ENCODE measurements at regions of chr2 and their contacts with region 1.

Region 1: DNA sequence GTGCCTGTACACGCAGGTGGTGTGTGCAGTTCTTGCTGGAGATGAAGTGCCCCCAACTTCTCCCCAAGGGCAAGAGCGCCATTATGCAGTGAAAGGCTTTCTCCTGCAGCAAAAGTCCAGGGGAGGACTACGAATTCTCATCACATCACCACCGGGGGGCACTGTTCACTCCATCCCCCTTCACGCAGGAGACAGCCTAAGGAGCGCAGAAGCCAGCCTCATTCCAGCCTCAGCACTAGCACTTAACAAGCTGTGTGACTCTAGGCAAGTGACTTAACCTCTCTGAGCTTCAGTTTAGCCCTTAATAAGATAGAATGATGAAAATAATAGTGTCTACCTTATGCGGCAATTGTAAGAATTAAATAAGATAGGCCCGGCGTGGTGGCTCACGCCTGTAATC is 32.3 kb downstream of the DNMT3A start:
- DNase-seq: peak; percentile 81
- ATAC-seq: peak; percentile 18
- H3K4me3 Mint-ChIP-seq: no peak overlapping the region
- H3K27ac Mint-ChIP-seq: peak overlapping the region; percentile 71
- H3K4me1 Mint-ChIP-seq: peaks cover 77% of the 10 kb centered on the region
- H3K27me3 Mint-ChIP-seq: no peaks in the 10 kb centered on the region
- CTCF ChIP-seq: peak; percentile 50

Region 2: GRCh38 chr2:25294573-25295462 is 14.6 kb before region 1 on chr2:
- CTCF ChIA-PET with region 1: interaction called, 12 read pairs
- POLR2A ChIA-PET with region 1: interaction called, 20 read pairs
- intact Hi-C with region 1: no loop called
- DNase-seq: peak; percentile 90
- ATAC-seq: peak; percentile 94
- H3K4me3 Mint-ChIP-seq: peak overlapping the region; percentile 63
- H3K27ac Mint-ChIP-seq: peak overlapping the region; percentile 89
- H3K4me1 Mint-ChIP-seq: peaks cover 71% of the 10 kb centered on the region
- H3K27me3 Mint-ChIP-seq: no peaks in the 10 kb centered on the region
- CTCF ChIP-seq: no peak

Region 3: DNA sequence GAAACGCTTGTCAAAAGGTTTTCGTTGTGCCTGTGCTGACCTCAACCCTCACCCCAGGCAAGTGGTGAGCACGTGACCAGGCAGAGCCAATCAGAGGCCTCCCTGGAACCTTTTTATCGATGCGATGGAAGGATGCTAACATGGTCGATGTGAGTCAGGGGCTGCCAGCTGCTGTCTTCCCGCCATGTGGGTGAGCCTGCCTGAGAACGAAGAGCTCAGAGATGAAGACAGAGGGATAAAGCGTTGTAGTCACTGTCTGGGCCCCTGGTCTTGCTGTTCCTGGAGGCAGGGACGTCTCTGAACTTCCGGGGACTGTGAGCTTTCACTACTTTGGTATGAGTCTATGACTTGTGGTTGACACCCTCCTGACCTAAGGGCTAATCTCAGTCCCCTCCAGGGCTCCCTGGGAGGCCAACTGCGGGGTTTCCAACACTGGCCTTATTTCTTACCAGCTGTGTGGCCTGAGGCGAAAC is 13.7 kb after region 1 on chr2:
- CTCF ChIA-PET with region 1: interaction called, 24 read pairs
- POLR2A ChIA-PET with region 1: interaction called, 21 read pairs
- intact Hi-C with region 1: no loop called
- DNase-seq: peak; percentile 87
- ATAC-seq: peak; percentile 75
- H3K4me3 Mint-ChIP-seq: peak overlapping the region; percentile 65
- H3K27ac Mint-ChIP-seq: peak overlapping the region; percentile 97
- H3K4me1 Mint-ChIP-seq: peaks cover 64% of the 10 kb centered on the region
- H3K27me3 Mint-ChIP-seq: no peaks in the 10 kb centered on the region
- CTCF ChIP-seq: no peak

Region 4: DNA sequence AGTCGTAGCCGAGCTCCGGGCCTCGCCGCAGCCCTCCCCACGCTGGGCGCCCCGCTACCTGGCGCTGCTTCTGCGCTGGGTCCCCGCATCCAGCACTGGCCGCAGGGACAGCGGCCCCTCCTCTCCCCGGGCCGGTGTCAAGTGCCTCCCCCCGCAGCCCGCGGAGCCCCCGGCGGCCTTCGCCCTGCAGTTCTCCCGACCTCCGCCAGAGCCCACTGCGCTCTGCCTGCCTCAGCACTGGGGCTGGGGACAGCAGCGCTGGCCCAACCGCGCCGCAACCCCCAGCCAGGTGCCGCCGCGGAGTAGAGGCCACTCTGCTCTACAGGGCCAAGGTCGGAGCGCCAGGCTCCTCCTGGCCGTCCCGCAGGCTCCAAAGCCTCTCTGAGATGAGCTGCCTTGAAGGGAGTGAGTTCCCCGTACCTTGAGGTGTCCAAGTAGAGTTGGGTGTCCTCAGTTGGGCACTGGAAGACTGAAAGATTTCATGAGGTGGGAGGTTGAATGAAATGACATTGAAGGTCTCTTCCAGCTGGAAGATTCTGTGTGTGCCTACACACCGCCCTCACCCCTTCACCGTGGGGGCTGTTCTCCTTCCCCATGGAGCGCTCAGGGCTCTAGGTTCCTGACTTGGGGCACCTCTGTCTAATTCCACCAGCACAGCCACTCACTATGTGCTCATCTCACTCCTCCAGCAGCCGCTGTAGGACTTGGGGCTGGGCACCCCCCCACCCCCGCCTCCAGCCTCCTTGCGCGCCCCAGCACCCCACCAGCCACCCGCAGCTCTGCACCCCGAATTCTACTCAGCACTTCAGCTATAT is 33.2 kb after region 1 on chr2:
- CTCF ChIA-PET with region 1: interaction called, 16 read pairs
- POLR2A ChIA-PET with region 1: interaction called, 51 read pairs
- intact Hi-C with region 1: no loop called
- DNase-seq: peak; percentile 88
- ATAC-seq: peak; percentile 84
- H3K4me3 Mint-ChIP-seq: peak overlapping the region; percentile 76
- H3K27ac Mint-ChIP-seq: peak overlapping the region; percentile 80
- H3K4me1 Mint-ChIP-seq: peaks cover 54% of the 10 kb centered on the region
- H3K27me3 Mint-ChIP-seq: no peaks in the 10 kb centered on the region
- CTCF ChIP-seq: peak; percentile 97

Region 5: GRCh38 chr2:25417715-25418369 is 108.4 kb after region 1 on chr2:
- CTCF ChIA-PET with region 1: no interaction called
- POLR2A ChIA-PET with region 1: no interaction called
- intact Hi-C with region 1: no loop called
- DNase-seq: peak; percentile 38
- ATAC-seq: peak; percentile 51
- H3K4me3 Mint-ChIP-seq: no peak overlapping the region
- H3K27ac Mint-ChIP-seq: peak overlapping the region; percentile 25
- H3K4me1 Mint-ChIP-seq: peaks cover 14% of the 10 kb centered on the region
- H3K27me3 Mint-ChIP-seq: no peaks in the 10 kb centered on the region
- CTCF ChIP-seq: no peak